Activated CD4-positive, alpha-beta T cell treated with anti-CD3 and anti-CD28 coated beads for 36 hours (primary cell): ENCODE measurements at regions of chr21 and their contacts with region 1.

Region 1: DNA sequence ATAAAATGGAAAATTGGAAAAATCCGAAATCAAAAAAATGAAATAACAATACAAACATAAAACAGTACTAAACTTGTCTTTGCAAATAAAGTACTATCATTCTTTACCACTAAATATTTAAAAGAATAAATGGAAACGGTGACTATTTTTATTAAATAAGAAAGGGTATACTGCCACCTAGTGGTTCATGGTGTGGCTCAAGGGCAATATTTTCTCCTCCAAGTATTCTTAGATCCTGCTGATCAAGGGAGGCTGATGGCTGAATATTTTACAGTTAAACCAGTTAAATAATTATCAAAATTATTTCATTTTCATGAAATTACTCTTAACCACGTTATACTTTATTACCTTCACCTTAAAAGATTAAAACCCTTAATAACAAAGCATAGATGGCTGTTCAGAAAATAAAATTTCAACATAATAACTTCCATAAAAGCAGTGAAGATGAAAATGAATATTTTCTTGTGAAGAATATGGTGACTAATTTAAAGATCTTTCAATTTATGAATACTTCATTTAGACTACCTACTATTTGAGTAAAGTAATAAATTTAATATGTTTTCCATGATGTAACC is 1793.9 kb downstream of the NCAM2 start:
- DNase-seq: peak; percentile 30
- ATAC-seq: no peak
- H3K4me3 Mint-ChIP-seq: no peak overlapping the region
- H3K27ac Mint-ChIP-seq: no peak overlapping the region
- H3K4me1 Mint-ChIP-seq: no peaks in the 10 kb centered on the region
- H3K27me3 Mint-ChIP-seq: no peaks in the 10 kb centered on the region

Region 2: DNA sequence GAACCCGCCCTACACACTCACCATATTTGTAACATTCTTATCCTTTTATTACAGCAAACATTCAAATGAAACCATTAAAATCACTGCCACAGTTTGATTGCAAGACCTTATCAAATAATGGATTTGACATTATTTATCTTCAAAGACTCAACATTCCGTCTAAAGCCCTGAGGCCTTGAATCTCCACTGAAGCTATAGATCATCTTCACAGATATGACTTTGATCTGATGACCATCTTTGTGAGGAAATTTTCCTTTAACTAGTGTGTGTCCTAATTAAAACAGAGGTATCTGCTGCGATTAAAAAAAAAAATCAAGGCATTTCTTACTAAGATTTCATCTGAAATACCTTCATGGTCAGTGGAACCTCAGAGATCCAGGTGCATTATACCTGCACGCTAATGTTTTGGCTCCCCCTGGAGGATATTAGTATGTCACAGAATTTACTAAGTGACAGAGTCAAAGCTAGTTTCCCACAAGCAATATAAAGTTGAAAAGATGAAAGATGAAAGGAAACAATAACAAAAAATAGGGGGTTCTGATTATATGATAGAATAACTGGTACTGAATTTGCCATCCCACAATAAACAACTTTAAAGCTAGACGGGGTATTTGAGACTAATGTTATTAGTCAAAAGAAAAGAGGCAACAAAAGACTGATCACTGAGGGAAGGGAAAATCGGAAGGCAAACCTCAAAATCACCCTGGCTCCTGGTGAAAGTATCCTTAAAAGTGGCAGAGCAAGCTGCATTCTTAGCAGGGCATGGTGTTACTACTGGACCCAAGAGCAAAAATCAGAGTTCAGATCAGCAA is 870.4 kb before region 1 on chr21:
- CTCF ChIA-PET with region 1: no interaction called
- POLR2A ChIA-PET with region 1: no interaction called
- intact Hi-C with region 1: loop called in 1 of 2 experiments (anchors 10 kb)
- DNase-seq: no peak
- ATAC-seq: no peak
- H3K4me3 Mint-ChIP-seq: no peak overlapping the region
- H3K27ac Mint-ChIP-seq: no peak overlapping the region
- H3K4me1 Mint-ChIP-seq: no peaks in the 10 kb centered on the region
- H3K27me3 Mint-ChIP-seq: peaks cover 6% of the 10 kb centered on the region

Region 3: GRCh38 chr21:22575165-22575584 is 216.9 kb before region 1 on chr21:
- CTCF ChIA-PET with region 1: no interaction called
- POLR2A ChIA-PET with region 1: no interaction called
- intact Hi-C with region 1: loop called in 1 of 2 experiments (anchors 10 kb)
- DNase-seq: peak; percentile 18
- ATAC-seq: peak; percentile 53
- H3K4me3 Mint-ChIP-seq: peak overlapping the region; percentile 10
- H3K27ac Mint-ChIP-seq: no peak overlapping the region
- H3K4me1 Mint-ChIP-seq: peaks cover 4% of the 10 kb centered on the region
- H3K27me3 Mint-ChIP-seq: no peaks in the 10 kb centered on the region

Region 4: DNA sequence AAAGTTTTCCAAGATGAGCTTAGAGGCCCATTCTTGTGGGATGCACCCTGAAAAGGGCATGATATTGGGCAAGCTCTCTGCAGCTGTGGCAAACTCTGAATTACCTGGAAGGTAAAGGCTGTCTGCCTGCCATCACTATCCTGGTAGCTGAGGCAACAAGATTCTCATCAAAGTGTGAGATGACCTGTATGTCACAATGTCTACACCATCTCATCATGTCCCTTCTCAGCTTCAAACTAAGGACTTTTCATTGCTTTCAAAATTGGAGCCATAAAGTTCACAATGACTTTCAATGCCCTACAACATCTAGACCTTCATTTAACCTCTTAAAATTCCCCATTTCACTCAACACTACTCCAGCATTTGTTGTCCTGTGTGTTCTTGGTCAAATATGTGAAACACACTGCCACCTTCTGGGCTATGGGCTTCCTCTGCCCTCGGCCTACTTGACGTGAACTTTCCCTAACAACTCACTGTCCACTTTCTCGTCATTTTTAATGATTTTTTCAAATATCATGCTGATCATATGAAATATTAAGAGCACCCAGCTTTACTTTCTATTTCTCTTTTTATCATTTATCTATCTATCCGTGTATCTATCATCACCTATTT is 224.4 kb after region 1 on chr21:
- CTCF ChIA-PET with region 1: no interaction called
- POLR2A ChIA-PET with region 1: no interaction called
- intact Hi-C with region 1: no loop called
- DNase-seq: no peak
- ATAC-seq: no peak
- H3K4me3 Mint-ChIP-seq: no peak overlapping the region
- H3K27ac Mint-ChIP-seq: no peak overlapping the region
- H3K4me1 Mint-ChIP-seq: no peaks in the 10 kb centered on the region
- H3K27me3 Mint-ChIP-seq: no peaks in the 10 kb centered on the region